ENCODE measurements at regions of chr17 and their contacts with region 1.

Region 1: GRCh38 chr17:35747540-35748017 is 5.5 kb downstream of the GAS2L2 start:
- DNase-seq: peak; percentile 62 to 86 (median 80)
- ATAC-seq: peak; percentile 99
- H3K4me3 ChIP-seq: no peak overlapping the region
- H3K4me3 Mint-ChIP-seq: no peak overlapping the region
- H3K27ac ChIP-seq: no peak overlapping the region
- H3K27ac Mint-ChIP-seq: no peak overlapping the region
- H3K4me1 ChIP-seq: peaks cover 7% of the 10 kb centered on the region
- H3K4me1 Mint-ChIP-seq: peaks cover 7% of the 10 kb centered on the region
- H3K27me3 ChIP-seq: peaks cover 17% of the 10 kb centered on the region in 2 experiments
- H3K27me3 Mint-ChIP-seq: peaks cover 49% of the 10 kb centered on the region
- CTCF ChIP-seq: peak; percentile 84

Region 2: GRCh38 chr17:34199932-34200534 is 1547.5 kb before region 1 on chr17:
- CTCF ChIA-PET with region 1: no interaction called
- POLR2A ChIA-PET with region 1: no interaction called
- intact Hi-C with region 1: loop called in 1 of 2 experiments (anchors 5 kb)
- DNase-seq: peak; percentile 47 to 82 (median 65)
- ATAC-seq: peak; percentile 92
- H3K4me3 ChIP-seq: no peak overlapping the region
- H3K4me3 Mint-ChIP-seq: no peak overlapping the region
- H3K27ac ChIP-seq: no peak overlapping the region
- H3K27ac Mint-ChIP-seq: no peak overlapping the region
- H3K4me1 ChIP-seq: no peaks in the 10 kb centered on the region
- H3K4me1 Mint-ChIP-seq: peaks cover 4% of the 10 kb centered on the region
- H3K27me3 ChIP-seq: peaks cover 0 to 2% of the 10 kb centered on the region in 2 experiments
- H3K27me3 Mint-ChIP-seq: peaks cover 25% of the 10 kb centered on the region
- CTCF ChIP-seq: peak; percentile 100

Region 3: GRCh38 chr17:34998205-34998604 is 749.4 kb before region 1 on chr17:
- CTCF ChIA-PET with region 1: interaction called, 6 read pairs
- POLR2A ChIA-PET with region 1: no interaction called
- intact Hi-C with region 1: loop called in 1 of 2 experiments (anchors 2 kb)
- DNase-seq: peak; percentile 57 to 87 (median 77)
- ATAC-seq: peak; percentile 97
- H3K4me3 ChIP-seq: no peak overlapping the region
- H3K4me3 Mint-ChIP-seq: no peak overlapping the region
- H3K27ac ChIP-seq: no peak overlapping the region
- H3K27ac Mint-ChIP-seq: peak overlapping the region; percentile 76
- H3K4me1 ChIP-seq: no peaks in the 10 kb centered on the region
- H3K4me1 Mint-ChIP-seq: peaks cover 5% of the 10 kb centered on the region
- H3K27me3 ChIP-seq: no peaks in the 10 kb centered on the region
- H3K27me3 Mint-ChIP-seq: no peaks in the 10 kb centered on the region
- CTCF ChIP-seq: peak; percentile 70

Region 4: DNA sequence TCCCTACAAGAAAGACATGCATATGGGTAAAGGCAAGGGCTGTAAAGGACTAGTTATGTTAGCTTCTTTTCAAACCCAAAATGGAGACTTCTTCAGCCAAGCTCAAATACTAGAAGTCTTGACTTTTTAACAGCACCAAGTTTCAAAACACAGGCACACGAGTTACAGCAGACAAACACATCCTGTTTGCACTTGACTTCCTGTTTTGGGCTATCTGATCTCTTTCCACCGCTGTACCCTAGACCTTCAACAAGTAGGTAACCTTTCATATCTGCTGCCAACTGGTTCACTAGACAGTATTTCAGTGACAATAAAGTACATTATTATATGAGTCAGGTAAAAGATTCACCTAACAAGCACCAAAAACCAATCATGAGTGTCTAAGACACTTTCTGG is 696.4 kb before region 1 on chr17:
- CTCF ChIA-PET with region 1: no interaction called
- POLR2A ChIA-PET with region 1: no interaction called
- intact Hi-C with region 1: no loop called
- DNase-seq: peak in 8 of 9 experiments; percentile 16 to 90 (median 53)
- ATAC-seq: peak; percentile 78
- H3K4me3 ChIP-seq: peak overlapping the region in 1 of 2 experiments; percentile 18
- H3K4me3 Mint-ChIP-seq: peak overlapping the region; percentile 59
- H3K27ac ChIP-seq: peak overlapping the region; percentile 65 to 87
- H3K27ac Mint-ChIP-seq: peak overlapping the region; percentile 94
- H3K4me1 ChIP-seq: peaks cover 72% of the 10 kb centered on the region
- H3K4me1 Mint-ChIP-seq: peaks cover 79% of the 10 kb centered on the region
- H3K27me3 ChIP-seq: no peaks in the 10 kb centered on the region
- H3K27me3 Mint-ChIP-seq: no peaks in the 10 kb centered on the region
- CTCF ChIP-seq: no peak

Region 5: DNA sequence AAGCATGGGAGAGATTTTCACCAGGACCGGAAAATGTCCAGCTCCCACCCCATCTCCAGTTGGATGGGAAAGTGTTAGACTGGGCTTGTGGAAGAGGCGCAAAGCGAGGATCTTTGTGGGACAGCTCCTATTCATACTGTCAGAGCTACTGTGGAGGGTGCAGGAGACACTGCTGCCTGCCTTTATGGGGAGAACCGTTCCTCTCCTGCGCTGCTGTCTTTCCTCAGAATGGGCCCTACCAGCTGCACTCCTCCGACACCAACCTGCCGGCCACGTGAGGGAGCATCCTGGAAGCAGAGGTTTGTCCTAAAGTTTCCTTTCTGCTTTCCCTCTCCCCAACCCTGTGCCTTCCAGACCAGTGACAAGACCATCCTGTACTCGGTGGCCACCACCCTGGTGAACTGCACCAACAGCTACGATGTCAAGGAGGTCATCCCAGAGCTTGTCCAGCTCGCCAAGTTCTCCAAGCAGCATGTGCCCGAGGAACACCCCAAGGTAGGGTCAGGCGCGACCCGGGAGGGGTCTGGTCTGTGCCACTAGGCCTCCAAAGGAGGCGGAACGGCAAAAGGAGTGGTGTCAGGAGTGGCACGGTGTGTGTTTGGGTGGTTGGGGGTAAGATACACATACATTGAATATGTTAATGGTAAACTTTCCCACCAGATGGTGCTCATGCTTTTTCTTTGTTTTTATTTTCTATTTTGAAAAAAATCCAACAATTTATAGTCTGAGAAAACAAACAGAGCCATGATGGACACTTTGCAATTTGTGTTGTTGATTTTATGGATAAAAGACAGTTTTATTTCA is 576.4 kb before region 1 on chr17:
- CTCF ChIA-PET with region 1: interaction called, 19 read pairs
- POLR2A ChIA-PET with region 1: no interaction called
- intact Hi-C with region 1: loop called in 1 of 2 experiments (anchors 1 kb)
- DNase-seq: peak in 5 of 9 experiments; percentile 31 to 70 (median 62)
- ATAC-seq: peak; percentile 79
- H3K4me3 ChIP-seq: peak overlapping the region; percentile 10 to 31
- H3K4me3 Mint-ChIP-seq: peak overlapping the region; percentile 57
- H3K27ac ChIP-seq: peak overlapping the region in 1 of 2 experiments; percentile 51
- H3K27ac Mint-ChIP-seq: peak overlapping the region; percentile 90
- H3K4me1 ChIP-seq: peaks cover 37% of the 10 kb centered on the region
- H3K4me1 Mint-ChIP-seq: peaks cover 46% of the 10 kb centered on the region
- H3K27me3 ChIP-seq: no peaks in the 10 kb centered on the region
- H3K27me3 Mint-ChIP-seq: no peaks in the 10 kb centered on the region
- CTCF ChIP-seq: peak; percentile 69

Region 6: DNA sequence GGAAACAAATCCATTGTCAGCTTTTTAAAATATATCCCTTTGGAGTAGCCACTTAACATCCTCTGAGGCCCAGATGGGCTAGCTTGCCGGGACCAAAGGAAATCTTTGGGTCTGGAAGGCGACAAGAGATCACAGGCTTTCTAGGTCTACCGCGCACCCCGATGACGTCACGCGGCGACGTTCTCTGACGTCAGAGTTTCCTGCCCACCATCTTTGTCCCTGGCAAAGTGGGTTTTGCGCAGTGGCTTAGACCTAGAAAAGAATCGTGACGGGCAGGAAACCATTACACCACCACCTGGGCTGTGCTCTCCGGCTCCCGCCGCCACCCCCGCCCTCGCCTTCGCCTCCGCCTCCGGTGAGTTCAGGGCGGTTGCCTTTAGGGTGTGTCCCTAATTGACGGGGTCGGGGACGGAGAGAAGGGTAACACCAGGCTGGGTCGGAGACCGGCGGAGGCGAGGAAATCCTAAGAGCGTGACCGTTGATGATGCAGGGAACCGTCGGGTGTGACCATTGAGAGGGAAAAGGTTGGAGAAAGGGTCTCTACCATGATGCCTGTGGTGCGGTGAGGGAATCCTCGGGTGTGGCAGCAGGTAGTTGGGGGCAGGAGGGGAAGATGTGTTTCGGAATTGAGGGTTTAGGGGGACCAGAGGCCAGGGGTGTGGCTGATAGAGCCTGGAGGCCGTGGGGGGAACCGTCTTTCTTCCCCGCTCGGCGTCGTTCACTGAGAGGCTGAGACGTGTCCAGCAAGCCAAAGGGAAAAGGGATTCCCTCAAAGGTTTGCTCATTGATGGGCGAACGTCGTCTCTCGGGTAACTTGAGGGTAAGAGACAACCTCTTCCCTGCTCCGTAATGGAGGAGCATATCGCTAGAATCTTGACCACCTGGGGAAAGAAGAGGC is 160.3 kb before region 1 on chr17 and contains the start of gene AP2B1:
- CTCF ChIA-PET with region 1: no interaction called
- POLR2A ChIA-PET with region 1: no interaction called
- intact Hi-C with region 1: loop called in 1 of 2 experiments (anchors 1 kb)
- DNase-seq: peak; percentile 96 to 100 (median 97)
- ATAC-seq: peak; percentile 98
- H3K4me3 ChIP-seq: peak within 1 kb of the TSS; percentile 84 to 92
- H3K4me3 Mint-ChIP-seq: peak within 1 kb of the TSS; percentile 99
- H3K27ac ChIP-seq: peak within 1 kb of the TSS; percentile 86 to 93
- H3K27ac Mint-ChIP-seq: peak within 1 kb of the TSS; percentile 98
- H3K4me1 ChIP-seq: peaks cover 21% of the 10 kb centered on the region
- H3K4me1 Mint-ChIP-seq: peaks cover 38% of the 10 kb centered on the region
- H3K27me3 ChIP-seq: no peaks in the 10 kb centered on the region
- H3K27me3 Mint-ChIP-seq: no peaks in the 10 kb centered on the region
- CTCF ChIP-seq: no peak
- total RNA-seq, gene AP2B1: 58.7 to 65.7 TPM

Region 7: GRCh38 chr17:35808962-35809854 is 61.6 kb after region 1 on chr17 and contains the start of gene TAF15:
- CTCF ChIA-PET with region 1: interaction called, 14 read pairs
- POLR2A ChIA-PET with region 1: interaction called, 6 read pairs
- intact Hi-C with region 1: no loop called
- DNase-seq: peak; percentile 90 to 98 (median 95)
- ATAC-seq: peak; percentile 90
- H3K4me3 ChIP-seq: peak within 1 kb of the TSS; percentile 64 to 71
- H3K4me3 Mint-ChIP-seq: peak within 1 kb of the TSS; percentile 98
- H3K27ac ChIP-seq: peak within 1 kb of the TSS; percentile 77 to 92
- H3K27ac Mint-ChIP-seq: peak within 1 kb of the TSS; percentile 99
- H3K4me1 ChIP-seq: peaks cover 48% of the 10 kb centered on the region
- H3K4me1 Mint-ChIP-seq: peaks cover 68% of the 10 kb centered on the region
- H3K27me3 ChIP-seq: no peaks in the 10 kb centered on the region
- H3K27me3 Mint-ChIP-seq: no peaks in the 10 kb centered on the region
- CTCF ChIP-seq: peak; percentile 74
- total RNA-seq, gene TAF15: 118 to 121 TPM